BJ (cell line): ENCODE measurements at regions of chr1 and their contacts with region 1.

Region 1: DNA sequence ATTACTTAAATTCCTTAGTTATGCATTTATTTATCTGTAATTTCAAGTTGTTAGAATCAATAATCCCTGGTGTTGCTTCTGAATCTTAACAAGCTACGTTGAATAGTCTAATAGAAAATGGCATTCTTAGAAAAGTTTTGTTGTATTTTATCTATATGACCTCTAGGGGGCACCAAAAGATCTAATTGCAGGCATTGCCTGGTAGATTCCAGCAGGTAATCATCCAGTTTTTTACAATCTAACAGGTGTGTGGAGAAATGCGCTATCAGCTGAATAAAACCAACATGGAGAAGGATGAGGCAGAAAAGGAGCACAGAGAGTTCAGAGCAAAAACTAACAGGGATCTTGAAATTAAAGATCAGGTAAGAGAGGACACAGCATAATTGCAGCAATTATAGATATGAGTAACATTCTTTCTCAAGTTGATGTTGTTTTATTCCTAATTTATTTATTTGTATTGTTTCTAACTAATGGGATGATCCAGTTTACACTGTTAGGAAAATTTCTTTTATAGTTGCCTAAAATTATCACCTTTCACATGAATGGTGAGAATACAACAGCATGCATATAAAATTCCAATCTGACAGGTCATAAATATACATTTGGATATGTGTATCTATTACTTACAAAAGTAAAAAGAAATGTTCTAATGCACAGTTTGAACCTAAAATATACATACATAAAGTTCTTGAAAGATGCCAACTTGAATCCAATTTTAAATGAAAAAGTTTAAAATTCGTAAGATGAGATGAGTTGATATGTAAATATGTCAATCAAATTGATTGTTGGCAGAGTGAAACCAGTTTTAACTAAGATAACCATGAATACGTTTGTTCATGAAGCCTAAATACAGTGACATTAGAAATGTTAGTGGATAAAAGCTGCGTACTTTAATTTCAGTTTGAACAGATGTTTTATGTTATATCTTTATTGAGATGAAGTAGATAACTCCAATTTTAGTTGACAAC is 88.4 kb downstream of the SDCCAG8 start:
- DNase-seq: no peak
- H3K4me3 ChIP-seq: no peak overlapping the region
- H3K27me3 ChIP-seq: no peaks in the 10 kb centered on the region
- CTCF ChIP-seq: peak; percentile 64

Region 2: DNA sequence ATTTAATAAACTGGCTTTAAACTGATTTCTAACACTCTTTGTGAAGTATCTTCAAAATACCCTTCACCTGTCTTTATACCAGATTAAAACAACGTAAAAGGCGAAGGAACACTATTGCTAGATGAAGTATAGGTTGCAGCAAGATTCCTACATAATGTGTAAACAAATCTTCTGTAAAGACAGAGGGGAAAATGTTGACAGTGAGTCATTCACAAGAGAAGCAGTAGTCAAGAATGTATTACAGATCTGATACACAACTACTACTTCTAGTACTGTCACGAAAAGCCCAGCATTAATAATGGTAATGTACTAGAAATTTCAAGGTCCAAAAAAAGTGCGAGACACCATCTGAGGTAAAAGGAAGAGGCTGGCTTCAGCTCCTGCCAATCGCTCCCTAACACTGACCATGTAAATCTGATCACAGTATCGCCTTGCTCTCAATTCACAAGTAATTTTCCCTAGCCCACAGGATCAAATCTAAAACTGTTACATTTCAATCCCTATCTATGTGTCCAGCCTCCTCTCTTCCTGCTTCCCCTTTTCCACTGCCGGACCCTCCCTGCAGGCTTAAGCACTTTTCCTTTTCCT is 215.4 kb after region 1 on chr1:
- CTCF ChIA-PET with region 1: no interaction called
- POLR2A ChIA-PET with region 1: no interaction called
- DNase-seq: no peak
- H3K4me3 ChIP-seq: no peak overlapping the region
- H3K27me3 ChIP-seq: no peaks in the 10 kb centered on the region
- CTCF ChIP-seq: no peak

Region 3: GRCh38 chr1:244272471-244273261 is 928.4 kb after region 1 on chr1:
- CTCF ChIA-PET with region 1: interaction called, 28 read pairs
- POLR2A ChIA-PET with region 1: no interaction called
- DNase-seq: peak; percentile 49
- H3K4me3 ChIP-seq: no peak overlapping the region
- H3K27me3 ChIP-seq: no peaks in the 10 kb centered on the region
- CTCF ChIP-seq: peak; percentile 90

Region 4: GRCh38 chr1:244297616-244298015 is 953.4 kb after region 1 on chr1:
- CTCF ChIA-PET with region 1: interaction called, 13 read pairs
- POLR2A ChIA-PET with region 1: no interaction called
- DNase-seq: no peak
- H3K4me3 ChIP-seq: no peak overlapping the region
- H3K27me3 ChIP-seq: no peaks in the 10 kb centered on the region
- CTCF ChIP-seq: no peak

Region 5: DNA sequence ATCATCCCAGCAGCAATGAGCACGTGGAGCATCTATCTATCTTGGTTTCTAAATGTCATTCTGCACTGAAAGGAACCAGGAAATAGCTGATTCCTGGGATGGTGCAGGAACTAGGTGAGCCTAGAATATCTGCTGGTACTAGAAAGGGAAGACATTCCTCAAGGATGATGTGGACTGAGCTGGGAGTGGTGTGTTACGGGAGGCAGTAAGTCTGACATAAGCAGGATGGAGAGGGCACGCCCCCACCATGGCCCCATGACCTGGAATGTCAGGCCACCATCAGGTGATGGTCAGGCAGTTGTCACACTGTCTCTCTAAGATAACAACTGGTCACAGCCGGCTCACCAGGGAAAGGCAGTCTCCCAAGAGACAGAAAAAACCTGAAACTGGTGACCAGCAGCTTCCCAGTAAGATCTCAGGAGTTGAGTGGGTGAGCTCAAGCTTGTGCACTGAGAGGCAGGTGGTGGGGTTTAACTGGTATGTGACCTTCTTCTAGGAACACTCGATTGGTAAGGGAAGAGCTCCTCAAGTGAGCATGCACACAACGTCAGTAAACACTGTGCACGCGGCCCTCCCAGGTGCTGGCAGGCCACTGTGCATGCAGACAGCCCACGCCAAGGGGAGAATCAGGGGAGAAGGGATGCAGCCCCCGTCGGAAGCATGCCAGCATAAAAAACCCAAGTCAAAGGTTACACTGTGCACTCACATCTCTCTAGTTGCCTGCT is 958.8 kb after region 1 on chr1:
- CTCF ChIA-PET with region 1: interaction called, 13 read pairs
- POLR2A ChIA-PET with region 1: no interaction called
- DNase-seq: no peak
- H3K4me3 ChIP-seq: no peak overlapping the region
- H3K27me3 ChIP-seq: no peaks in the 10 kb centered on the region
- CTCF ChIP-seq: no peak